Mucosa of descending colon (tissue), 3 donors: ENCODE measurements at regions of chr11 and their contacts with region 1.

Region 1: GRCh38 chr11:133821776-133822175 is 23.5 kb downstream of the SPATA19 start:
- DNase-seq: peak in 1 of 3 donors; percentile 56
- ATAC-seq: peak; percentile 56
- H3K4me3 ChIP-seq: no peak overlapping the region
- H3K4me1 ChIP-seq: no peaks in the 10 kb centered on the region
- CTCF ChIP-seq: no peak

Region 2: GRCh38 chr11:133134314-133135173 is 687.2 kb before region 1 on chr11:
- intact Hi-C with region 1: loop called in 1 of 2 experiments (anchors 10 kb)
- DNase-seq: peak in 2 of 3 donors; percentile 56 to 73
- ATAC-seq: peak; percentile 75
- H3K4me3 ChIP-seq: no peak overlapping the region
- H3K4me1 ChIP-seq: no peaks in the 10 kb centered on the region
- CTCF ChIP-seq: peak; percentile 68